PC-9 (cell line): ENCODE measurements at regions of chr3 and their contacts with region 1.

Region 1: DNA sequence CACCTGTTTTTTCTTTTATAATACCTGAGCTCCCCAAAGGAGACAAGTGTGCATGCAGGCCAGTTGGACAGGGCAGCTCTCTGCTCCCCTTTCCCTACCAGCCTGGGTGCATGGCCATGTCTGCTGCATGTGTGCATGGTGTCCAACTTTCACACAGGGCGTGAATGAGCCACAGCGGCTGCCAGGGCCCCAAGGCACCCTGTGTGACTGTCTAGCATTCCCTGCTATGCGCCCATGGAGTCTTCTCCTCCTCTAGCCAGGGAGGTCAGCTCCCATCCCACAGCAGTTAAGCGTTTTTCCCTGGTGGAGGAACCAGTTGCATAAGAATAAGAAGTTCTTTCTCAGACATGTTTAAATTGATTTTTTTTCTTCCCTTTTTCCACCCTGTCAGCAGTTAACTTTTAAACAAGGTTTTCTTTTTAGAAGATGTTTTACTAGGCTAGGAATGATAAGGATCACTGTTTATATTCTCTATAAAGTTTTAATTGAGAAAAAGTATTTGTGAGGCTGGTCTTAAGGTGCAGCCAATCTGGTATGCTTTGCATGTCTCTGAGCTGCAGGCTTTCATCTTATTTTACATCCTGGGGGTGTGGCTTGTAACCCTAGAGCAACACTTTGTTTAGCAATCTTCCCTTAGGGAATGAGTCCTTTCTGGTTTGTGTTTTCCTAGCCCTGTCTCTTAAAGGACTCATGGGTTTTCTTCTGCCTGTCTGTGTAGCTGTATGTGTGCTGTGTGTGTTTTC is 20.5 kb upstream of the OR5H1 start:
- DNase-seq: no peak
- H3K4me3 ChIP-seq: no peak overlapping the region
- H3K27ac ChIP-seq: no peak overlapping the region
- H3K4me1 ChIP-seq: no peaks in the 10 kb centered on the region
- H3K27me3 ChIP-seq: no peaks in the 10 kb centered on the region
- CTCF ChIP-seq: no peak

Region 2: DNA sequence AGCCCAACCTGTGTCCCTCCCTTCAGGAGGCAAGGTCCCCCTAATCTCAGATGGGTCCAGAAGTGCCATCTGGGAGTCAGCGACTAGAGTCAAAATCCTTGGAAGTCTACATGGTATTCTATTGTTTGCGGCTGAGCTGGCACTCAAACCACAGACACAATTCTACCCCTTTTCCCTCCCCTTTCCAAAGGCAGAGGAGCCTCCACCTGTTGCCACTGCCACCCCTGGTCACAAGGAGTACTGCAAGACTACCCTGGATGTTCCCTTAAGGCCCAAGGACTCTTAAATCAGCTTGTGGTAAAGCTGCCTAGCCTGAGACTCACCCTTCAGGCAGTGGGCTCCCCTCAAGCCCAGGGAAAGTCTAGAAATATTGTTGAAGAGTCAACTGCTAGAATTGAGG is 149.7 kb after region 1 on chr3:
- CTCF ChIA-PET with region 1: no interaction called
- POLR2A ChIA-PET with region 1: no interaction called
- intact Hi-C with region 1: loop called (anchors 10 kb)
- DNase-seq: no peak
- H3K4me3 ChIP-seq: no peak overlapping the region
- H3K27ac ChIP-seq: no peak overlapping the region
- H3K4me1 ChIP-seq: no peaks in the 10 kb centered on the region
- H3K27me3 ChIP-seq: no peaks in the 10 kb centered on the region
- CTCF ChIP-seq: peak; percentile 63